Sigmoid colon (tissue), 7 donors: ENCODE measurements at regions of chr16 and their contacts with region 1.

Region 1: DNA sequence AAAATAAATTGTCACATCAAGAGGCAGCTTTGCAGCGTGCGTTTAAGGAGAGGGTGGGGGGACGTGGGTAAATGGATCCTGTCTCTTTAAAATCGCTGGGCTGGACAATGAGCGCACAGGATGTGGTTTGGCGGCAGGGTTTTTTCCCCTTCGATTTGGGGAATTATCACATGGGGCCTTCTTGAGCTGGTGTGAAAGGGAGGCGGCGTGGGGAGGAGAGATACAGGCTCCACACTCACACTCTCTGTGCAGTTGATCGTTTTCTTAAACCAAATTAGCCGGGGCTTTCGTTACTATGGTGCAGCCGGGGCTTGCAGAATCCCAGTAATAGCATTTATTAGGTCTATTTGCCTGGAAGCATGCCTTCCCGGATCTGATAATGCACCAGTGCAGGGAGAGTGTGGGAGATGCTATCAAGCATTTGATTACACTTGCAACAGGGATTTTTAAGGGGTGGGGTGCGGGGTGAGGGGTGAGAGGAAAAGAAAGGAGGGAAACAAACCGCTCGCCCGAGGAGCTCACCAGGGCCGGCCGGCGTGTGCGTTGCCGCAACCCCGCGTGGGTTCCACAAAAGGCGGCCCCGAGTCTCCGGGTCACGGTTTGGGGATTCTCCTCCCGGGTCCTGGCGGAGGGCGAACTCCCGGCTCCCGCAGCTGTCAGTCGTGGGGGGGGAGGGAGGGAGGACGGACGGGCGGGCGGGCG is 58.9 kb upstream of the GSE1 start:
- DNase-seq: peak; percentile 88
- H3K4me3 ChIP-seq: peak overlapping the region; percentile 62 to 87 (median 80)
- H3K27ac ChIP-seq: peak overlapping the region; percentile 84 to 96 (median 94)
- H3K4me1 ChIP-seq: peaks cover 0 to 58% (median 45%) of the 10 kb centered on the region in 4 donors
- H3K27me3 ChIP-seq: no peaks in the 10 kb centered on the region
- CTCF ChIP-seq: no peak
- EP300 ChIP-seq: no peak
- POLR2A ChIP-seq: peak in 1 of 2 donors; percentile 26

Region 2: DNA sequence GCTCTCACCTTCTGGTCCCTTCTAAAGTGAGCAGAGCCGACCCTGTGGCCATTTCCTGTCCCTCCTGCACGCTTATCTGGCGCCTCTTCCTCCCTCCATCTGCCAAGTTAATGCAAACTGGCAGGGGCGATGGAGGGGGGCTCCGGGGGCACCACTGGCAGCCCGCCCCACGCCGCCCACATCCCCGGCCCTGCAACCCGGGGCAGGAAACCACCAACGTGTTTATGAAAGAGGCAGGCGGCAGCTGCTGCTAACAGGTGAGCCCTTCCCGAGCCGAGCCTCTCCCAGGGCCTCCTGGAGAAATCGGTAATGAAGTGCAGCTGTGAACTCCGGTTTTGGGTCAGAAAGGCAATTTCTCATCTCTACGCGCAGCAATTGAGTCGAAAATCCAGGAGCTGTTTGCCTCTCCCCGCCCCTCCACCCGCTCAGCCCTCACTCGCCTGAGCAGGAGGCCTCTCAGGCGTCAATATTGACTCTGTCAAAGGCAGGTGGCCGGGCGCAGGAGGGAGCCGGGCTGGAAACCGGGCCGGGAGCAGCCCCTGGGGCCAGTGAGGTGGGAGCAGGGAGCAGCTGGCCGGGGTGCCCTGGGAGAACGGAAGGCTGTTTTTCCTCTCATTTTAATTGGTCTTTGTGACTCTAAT is 105.6 kb before region 1 on chr16:
- intact Hi-C with region 1: no loop called
- DNase-seq: no peak
- H3K4me3 ChIP-seq: no peak overlapping the region
- H3K27ac ChIP-seq: peak overlapping the region in 3 of 4 donors; percentile 65 to 75 (median 68)
- H3K4me1 ChIP-seq: peaks cover 0 to 55% (median 39%) of the 10 kb centered on the region in 4 donors
- H3K27me3 ChIP-seq: no peaks in the 10 kb centered on the region
- CTCF ChIP-seq: no peak
- EP300 ChIP-seq: no peak
- POLR2A ChIP-seq: no peak

Region 3: DNA sequence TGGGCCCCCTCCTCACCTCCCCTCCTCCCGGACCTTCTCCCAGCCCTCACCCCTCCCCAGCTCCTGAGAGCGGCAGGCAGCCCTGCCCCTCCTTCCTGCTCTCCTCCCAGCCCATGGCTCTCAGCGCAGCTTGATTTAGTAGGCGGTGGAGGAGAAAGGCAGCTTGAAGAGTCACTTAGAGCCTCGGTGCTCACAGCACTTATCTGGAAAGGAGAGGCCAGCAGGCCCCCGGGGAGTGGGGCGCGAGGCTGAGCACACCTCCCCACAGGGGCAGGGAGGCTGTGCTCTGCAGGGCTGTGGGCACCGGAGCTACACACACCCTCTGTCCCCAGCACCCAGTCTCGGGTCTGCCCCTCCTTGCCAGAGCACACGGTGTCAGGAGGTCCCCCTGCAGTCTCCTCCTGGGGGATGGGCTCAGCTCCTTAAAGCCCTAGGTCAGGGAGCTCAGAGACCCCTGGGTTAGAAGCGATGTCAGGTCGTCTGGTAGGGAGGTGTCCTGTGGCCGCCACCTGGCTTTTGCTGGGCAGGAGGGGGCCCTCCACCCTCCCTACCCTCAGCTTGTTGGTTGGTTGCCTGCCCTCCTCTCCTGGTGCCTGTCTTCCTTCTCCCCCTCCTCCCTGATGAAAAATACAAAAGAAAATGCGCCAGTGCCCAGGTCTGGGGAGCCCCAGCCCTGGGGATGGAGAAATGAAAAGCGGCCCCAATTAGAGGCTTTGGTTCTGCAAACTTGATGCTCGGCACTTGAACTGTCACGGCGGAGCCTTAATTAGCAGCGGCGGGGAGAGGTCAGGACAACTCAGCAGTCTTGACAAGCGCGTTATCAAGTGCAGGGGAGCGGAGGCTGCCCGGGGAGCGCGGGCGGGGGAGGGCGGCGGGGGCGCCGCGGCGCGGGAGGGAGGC is 92.2 kb before region 1 on chr16:
- intact Hi-C with region 1: loop called (anchors 1 kb)
- DNase-seq: peak; percentile 82
- H3K4me3 ChIP-seq: peak overlapping the region; percentile 26 to 54 (median 46)
- H3K27ac ChIP-seq: peak overlapping the region; percentile 65 to 86 (median 84)
- H3K4me1 ChIP-seq: peaks cover 0 to 79% (median 71%) of the 10 kb centered on the region in 4 donors
- H3K27me3 ChIP-seq: no peaks in the 10 kb centered on the region
- CTCF ChIP-seq: no peak
- EP300 ChIP-seq: no peak
- POLR2A ChIP-seq: no peak

Region 4: DNA sequence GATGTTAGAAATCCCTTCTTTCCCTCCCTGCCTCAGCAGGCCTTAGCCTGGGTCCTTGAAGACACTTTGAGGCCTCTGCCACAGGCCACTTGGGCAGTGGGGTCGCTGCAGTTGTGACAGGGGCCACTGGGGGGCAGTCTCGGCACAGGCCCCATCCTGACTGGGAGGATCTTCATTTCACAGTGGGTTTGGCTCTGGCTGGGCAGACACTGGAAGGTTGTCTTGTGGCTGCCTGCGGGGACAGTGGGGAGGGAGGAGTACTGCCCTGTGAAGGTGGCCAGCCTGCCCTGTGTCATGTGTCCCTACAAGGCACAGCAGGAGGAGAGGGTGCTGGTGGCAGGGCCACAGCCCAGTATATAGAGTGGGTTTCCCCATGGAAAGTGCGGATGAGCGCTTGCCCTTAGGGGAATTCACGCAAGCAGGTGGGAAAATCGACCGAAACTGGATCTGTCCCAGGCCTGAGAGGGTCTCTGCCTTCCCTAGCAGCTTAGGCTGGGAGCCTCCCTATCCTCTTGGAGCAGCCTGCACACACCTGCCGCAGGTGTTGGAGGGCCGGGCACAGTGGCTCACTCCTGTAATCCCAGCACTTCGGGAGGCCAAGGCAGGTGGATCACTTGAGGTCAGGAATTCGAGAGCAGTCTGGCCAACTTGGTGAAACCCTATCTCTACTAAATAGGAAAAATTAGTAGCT is 105.7 kb after region 1 on chr16:
- intact Hi-C with region 1: no loop called
- DNase-seq: peak; percentile 75
- H3K4me3 ChIP-seq: no peak overlapping the region
- H3K27ac ChIP-seq: peak overlapping the region in 2 of 4 donors; percentile 4 to 44
- H3K4me1 ChIP-seq: peaks cover 0 to 13% (median 10%) of the 10 kb centered on the region in 4 donors
- H3K27me3 ChIP-seq: no peaks in the 10 kb centered on the region
- CTCF ChIP-seq: peak; percentile 56 to 79 (median 73)
- EP300 ChIP-seq: no peak
- POLR2A ChIP-seq: no peak